Activated naive CD4-positive, alpha-beta T cell treated with anti-CD3 and anti-CD28 coated beads for 36 hours (primary cell): ENCODE measurements at regions of chr17 and their contacts with region 1.

Region 1: DNA sequence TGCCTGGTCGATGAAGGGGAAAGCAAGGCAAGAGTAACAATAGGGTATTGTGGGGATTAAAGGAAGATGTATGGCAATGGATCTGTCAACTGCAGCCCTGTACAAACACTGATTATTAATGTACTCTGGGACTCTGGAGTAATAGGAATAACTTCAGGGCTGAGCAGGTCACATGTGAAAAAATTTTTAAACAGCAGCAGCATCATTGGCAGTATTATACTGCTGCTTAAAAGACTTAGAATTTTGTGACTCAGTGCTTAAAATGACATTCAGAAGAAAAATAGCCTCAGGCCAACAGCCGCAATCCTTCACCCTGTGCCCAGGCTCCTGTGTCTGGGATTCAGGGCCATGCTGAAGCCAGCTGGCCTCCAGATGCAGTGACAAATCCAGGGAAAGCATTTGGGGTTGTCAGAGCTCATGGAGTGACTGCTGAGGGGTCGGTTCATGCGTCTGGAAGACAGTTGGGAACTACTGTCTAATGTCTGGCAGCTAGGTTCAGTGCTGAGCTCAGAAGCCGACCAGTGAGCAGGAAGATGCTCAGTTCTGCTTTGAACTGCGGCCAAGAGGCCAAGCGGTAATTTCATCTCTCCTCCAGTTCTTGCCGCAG is 22.2 kb downstream of the TEX2 start:
- DNase-seq: no peak
- H3K4me3 Mint-ChIP-seq: no peak overlapping the region
- H3K27ac Mint-ChIP-seq: peak overlapping the region; percentile 25
- H3K4me1 Mint-ChIP-seq: peaks cover 41% of the 10 kb centered on the region
- H3K27me3 Mint-ChIP-seq: no peaks in the 10 kb centered on the region

Region 2: DNA sequence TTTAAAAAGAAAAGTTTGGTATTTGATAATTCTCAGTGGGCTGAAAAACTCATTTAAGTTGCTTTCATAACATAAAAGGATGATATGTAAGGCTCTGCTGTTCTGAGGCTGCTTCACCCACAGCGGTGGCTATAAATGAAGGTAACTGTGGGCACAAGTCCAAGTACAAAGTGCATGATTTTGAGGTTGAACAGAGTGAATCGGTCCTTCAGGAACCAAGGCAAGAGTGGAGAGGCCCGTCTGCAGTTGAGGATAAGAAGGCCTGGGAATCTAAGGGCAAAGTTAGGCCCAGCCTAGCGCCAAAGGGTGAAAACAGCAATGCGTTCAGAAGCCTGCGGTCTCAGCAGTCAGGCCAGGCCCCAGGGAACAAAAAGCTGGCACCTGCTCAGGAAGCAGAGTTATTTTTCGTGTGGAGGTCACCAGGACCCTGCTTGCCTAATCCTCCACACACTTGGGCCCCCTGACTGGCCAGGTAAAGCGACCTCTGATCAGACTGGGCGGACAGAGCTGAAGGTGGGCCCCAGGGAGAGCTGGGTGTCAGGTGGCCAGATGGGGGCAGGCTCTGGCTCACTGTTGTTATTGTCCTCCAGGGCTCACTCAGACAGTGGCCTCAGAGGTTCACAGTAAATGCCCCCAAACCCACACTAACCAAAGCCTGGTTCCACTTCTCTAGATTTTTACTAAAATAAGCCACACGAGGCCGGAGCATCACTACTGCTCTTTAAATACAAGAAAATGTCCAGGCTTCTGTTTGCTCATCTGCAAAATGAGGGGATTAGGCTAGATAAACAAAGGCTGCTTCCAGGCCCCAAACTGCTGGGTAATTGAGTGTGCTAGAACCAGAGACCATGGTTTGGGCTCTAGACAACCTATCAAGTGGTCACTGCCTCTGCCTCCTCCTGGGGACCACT is 24.3 kb before region 1 on chr17:
- CTCF ChIA-PET with region 1: no interaction called
- intact Hi-C with region 1: loop called (anchors 1 kb)
- DNase-seq: no peak
- H3K4me3 Mint-ChIP-seq: no peak overlapping the region
- H3K27ac Mint-ChIP-seq: no peak overlapping the region
- H3K4me1 Mint-ChIP-seq: peaks cover 33% of the 10 kb centered on the region
- H3K27me3 Mint-ChIP-seq: no peaks in the 10 kb centered on the region